ENCODE measurements at regions of chr3 and their contacts with region 1.

Region 1: DNA sequence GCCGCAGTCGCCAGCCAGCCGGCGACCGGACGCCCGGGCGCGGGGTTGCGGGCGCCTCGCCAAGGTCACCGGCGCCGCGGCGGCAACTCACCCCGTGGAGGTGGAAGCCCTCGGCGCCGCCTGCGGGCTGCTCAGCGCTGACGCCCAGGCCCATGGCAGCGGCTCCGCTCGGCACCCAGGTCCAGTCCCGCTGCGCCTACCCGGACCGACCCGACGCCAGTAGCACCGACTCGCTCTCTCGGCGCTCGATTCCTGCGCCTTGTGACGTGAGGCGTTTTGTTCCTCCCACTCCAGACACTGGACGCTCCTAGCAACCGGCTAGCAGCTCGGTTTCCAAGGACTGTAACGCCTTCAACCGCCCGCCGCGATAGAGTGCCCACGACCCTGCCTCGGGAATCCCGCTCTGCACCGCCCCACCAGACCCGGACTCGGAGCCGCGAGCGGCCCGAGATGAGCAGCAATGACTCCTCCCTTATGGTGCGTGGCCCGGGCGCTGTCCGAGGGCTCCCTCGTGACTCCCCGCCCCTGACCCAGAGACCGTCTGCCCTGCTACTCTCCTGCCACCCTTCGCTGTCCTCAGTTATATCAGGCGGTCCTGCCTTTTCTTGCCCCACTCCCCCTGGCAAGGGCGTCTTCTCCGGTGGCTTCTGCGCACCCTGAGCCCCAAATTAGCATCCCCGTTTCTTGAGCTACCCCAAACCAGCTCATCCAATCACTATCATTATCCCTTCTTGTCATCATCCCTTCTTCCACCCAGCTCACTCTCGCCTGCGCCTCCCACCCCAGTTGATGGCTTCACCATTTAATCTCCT is at the starts of genes GORASP1 and TTC21A:
- DNase-seq: peak; percentile 80
- ATAC-seq: peak; percentile 48
- H3K4me3 ChIP-seq: peak within 1 kb of the TSS; percentile 63 to 99 (median 96)
- H3K4me3 Mint-ChIP-seq: peak within 1 kb of the TSS; percentile 93
- H3K27ac ChIP-seq: peak within 1 kb of the TSS; percentile 63 to 88
- H3K27ac Mint-ChIP-seq: peak within 1 kb of the TSS; percentile 90
- H3K4me1 ChIP-seq: peaks cover 41 to 54% of the 10 kb centered on the region in 2 donors
- H3K4me1 Mint-ChIP-seq: peaks cover 62% of the 10 kb centered on the region
- H3K27me3 ChIP-seq: no peaks in the 10 kb centered on the region
- H3K27me3 Mint-ChIP-seq: no peaks in the 10 kb centered on the region
- CTCF ChIP-seq: no peak
- total RNA-seq, gene GORASP1: 84.0 and 97.5 TPM in 2 replicates
- total RNA-seq, gene TTC21A: 106 and 116 TPM in 2 replicates

Region 2: GRCh38 chr3:38136777-38137614 is 970.6 kb before region 1 on chr3 and contains the start of gene ACAA1:
- CTCF ChIA-PET with region 1: no interaction called
- POLR2A ChIA-PET with region 1: no interaction called
- intact Hi-C with region 1: loop called (anchors 10 kb)
- DNase-seq: peak; percentile 99
- ATAC-seq: peak; percentile 91
- H3K4me3 ChIP-seq: peak within 1 kb of the TSS; percentile 84 to 98 (median 92)
- H3K4me3 Mint-ChIP-seq: peak within 1 kb of the TSS; percentile 92
- H3K27ac ChIP-seq: peak within 1 kb of the TSS; percentile 85 to 87
- H3K27ac Mint-ChIP-seq: peak within 1 kb of the TSS; percentile 94
- H3K4me1 ChIP-seq: peaks cover 39 to 52% of the 10 kb centered on the region in 2 donors
- H3K4me1 Mint-ChIP-seq: peaks cover 65% of the 10 kb centered on the region
- H3K27me3 ChIP-seq: no peaks in the 10 kb centered on the region
- H3K27me3 Mint-ChIP-seq: no peaks in the 10 kb centered on the region
- CTCF ChIP-seq: no peak
- total RNA-seq, gene ACAA1: 87.4 and 98.4 TPM in 2 replicates

Region 3: GRCh38 chr3:39126532-39127071 is 19.0 kb after region 1 on chr3:
- CTCF ChIA-PET with region 1: interaction called, 23 read pairs
- POLR2A ChIA-PET with region 1: interaction called, 4 read pairs
- intact Hi-C with region 1: loop called (anchors 1 kb)
- DNase-seq: peak; percentile 50
- ATAC-seq: peak; percentile 37
- H3K4me3 ChIP-seq: no peak overlapping the region
- H3K4me3 Mint-ChIP-seq: peak overlapping the region; percentile 11
- H3K27ac ChIP-seq: no peak overlapping the region
- H3K27ac Mint-ChIP-seq: peak overlapping the region; percentile 62
- H3K4me1 ChIP-seq: peaks cover 47 to 50% of the 10 kb centered on the region in 2 donors
- H3K4me1 Mint-ChIP-seq: peaks cover 62% of the 10 kb centered on the region
- H3K27me3 ChIP-seq: no peaks in the 10 kb centered on the region
- H3K27me3 Mint-ChIP-seq: no peaks in the 10 kb centered on the region
- CTCF ChIP-seq: no peak

Region 4: GRCh38 chr3:39180546-39181346 is 73.2 kb after region 1 on chr3:
- CTCF ChIA-PET with region 1: interaction called, 10 read pairs
- POLR2A ChIA-PET with region 1: no interaction called
- intact Hi-C with region 1: loop called (anchors 1 kb)
- DNase-seq: peak; percentile 95
- ATAC-seq: peak; percentile 85
- H3K4me3 ChIP-seq: peak overlapping the region; percentile 6 to 51 (median 37)
- H3K4me3 Mint-ChIP-seq: peak overlapping the region; percentile 82
- H3K27ac ChIP-seq: peak overlapping the region; percentile 9 to 47
- H3K27ac Mint-ChIP-seq: peak overlapping the region; percentile 72
- H3K4me1 ChIP-seq: peaks cover 23 to 35% of the 10 kb centered on the region in 2 donors
- H3K4me1 Mint-ChIP-seq: peaks cover 32% of the 10 kb centered on the region
- H3K27me3 ChIP-seq: no peaks in the 10 kb centered on the region
- H3K27me3 Mint-ChIP-seq: no peaks in the 10 kb centered on the region
- CTCF ChIP-seq: no peak

Region 5: GRCh38 chr3:39383045-39383880 is 275.7 kb after region 1 on chr3 and contains the start of gene SLC25A38:
- CTCF ChIA-PET with region 1: no interaction called
- POLR2A ChIA-PET with region 1: no interaction called
- intact Hi-C with region 1: loop called (anchors 5 kb)
- DNase-seq: peak; percentile 93
- ATAC-seq: peak; percentile 71
- H3K4me3 ChIP-seq: peak within 1 kb of the TSS; percentile 4 to 91 (median 83)
- H3K4me3 Mint-ChIP-seq: peak within 1 kb of the TSS; percentile 98
- H3K27ac ChIP-seq: peak within 1 kb of the TSS; percentile 94 to 96
- H3K27ac Mint-ChIP-seq: peak within 1 kb of the TSS; percentile 99
- H3K4me1 ChIP-seq: peaks cover 43 to 50% of the 10 kb centered on the region in 2 donors
- H3K4me1 Mint-ChIP-seq: peaks cover 42% of the 10 kb centered on the region
- H3K27me3 ChIP-seq: no peaks in the 10 kb centered on the region
- H3K27me3 Mint-ChIP-seq: no peaks in the 10 kb centered on the region
- CTCF ChIP-seq: peak; percentile 60
- total RNA-seq, gene SLC25A38: 46.3 and 53.0 TPM in 2 replicates

Region 6: GRCh38 chr3:39406368-39407258 is 299.0 kb after region 1 on chr3 and contains the start of gene RPSA:
- CTCF ChIA-PET with region 1: no interaction called
- POLR2A ChIA-PET with region 1: no interaction called
- intact Hi-C with region 1: no loop called
- DNase-seq: peak; percentile 98
- ATAC-seq: peak; percentile 93
- H3K4me3 ChIP-seq: peak within 1 kb of the TSS; percentile 72 to 97 (median 83)
- H3K4me3 Mint-ChIP-seq: peak within 1 kb of the TSS; percentile 89
- H3K27ac ChIP-seq: peak within 1 kb of the TSS; percentile 75 to 76
- H3K27ac Mint-ChIP-seq: peak within 1 kb of the TSS; percentile 88
- H3K4me1 ChIP-seq: peaks cover 22 to 35% of the 10 kb centered on the region in 2 donors
- H3K4me1 Mint-ChIP-seq: peaks cover 39% of the 10 kb centered on the region
- H3K27me3 ChIP-seq: no peaks in the 10 kb centered on the region
- H3K27me3 Mint-ChIP-seq: no peaks in the 10 kb centered on the region
- CTCF ChIP-seq: peak; percentile 22
- total RNA-seq, gene RPSA: 1,418 and 1,460 TPM in 2 replicates

Measured in B cell (primary cell).